A549 (cell line): ENCODE measurements at regions of chr15 and their contacts with region 1.

Region 1: GRCh38 chr15:89177633-89178306 is 43.6 kb downstream of the RLBP1 start:
- DNase-seq: peak; percentile 70 to 82
- ATAC-seq: peak; percentile 83 to 89
- H3K4me3 ChIP-seq: no peak overlapping the region
- H3K27ac ChIP-seq: peak overlapping the region; percentile 10 to 14; a peak in 1 of 6 replicates
- H3K4me1 ChIP-seq: no peaks in the 10 kb centered on the region
- CTCF ChIP-seq: peak; percentile 98
- EP300 ChIP-seq: no peak
- POLR2A ChIP-seq: no peak
- RAD21 ChIP-seq: peak; percentile 94 to 96

Region 2: DNA sequence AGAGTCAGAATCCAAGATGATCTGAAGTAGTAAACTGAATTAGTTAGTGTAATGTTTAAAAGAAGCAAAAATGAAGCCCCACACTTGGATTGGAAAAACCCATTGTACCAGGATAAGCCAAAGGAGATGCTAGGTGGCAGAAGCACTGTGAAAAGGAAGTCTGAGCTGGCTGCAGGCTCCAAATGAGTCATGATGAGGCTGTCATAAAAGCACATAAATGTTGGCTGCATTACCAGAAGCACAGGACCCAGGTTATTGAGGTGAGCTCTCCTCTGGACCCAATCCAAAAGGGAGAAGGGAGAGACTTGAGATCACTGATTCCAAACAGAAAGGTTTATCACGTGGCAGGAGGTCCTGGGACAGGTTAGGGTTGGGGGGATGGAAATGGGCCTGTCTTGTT is 377.7 kb before region 1 on chr15:
- CTCF ChIA-PET with region 1: no interaction called
- POLR2A ChIA-PET with region 1: no interaction called
- DNase-seq: peak in 1 of 2 experiments; percentile 36
- ATAC-seq: peak; percentile 34 to 45; a peak in 2 of 6 replicates
- H3K4me3 ChIP-seq: no peak overlapping the region
- H3K27ac ChIP-seq: no peak overlapping the region
- H3K4me1 ChIP-seq: peaks cover 7% of the 10 kb centered on the region; the same call in 1 of the 3 replicates
- CTCF ChIP-seq: no peak
- EP300 ChIP-seq: no peak
- POLR2A ChIP-seq: no peak
- RAD21 ChIP-seq: no peak

Region 3: GRCh38 chr15:88878720-88879184 is 299.0 kb before region 1 on chr15:
- CTCF ChIA-PET with region 1: interaction called, 16 read pairs
- POLR2A ChIA-PET with region 1: no interaction called
- DNase-seq: peak; percentile 68 to 87
- ATAC-seq: peak; percentile 91 to 95
- H3K4me3 ChIP-seq: no peak overlapping the region
- H3K27ac ChIP-seq: no peak overlapping the region
- H3K4me1 ChIP-seq: no peaks in the 10 kb centered on the region
- CTCF ChIP-seq: peak; percentile 78
- EP300 ChIP-seq: no peak
- POLR2A ChIP-seq: no peak
- RAD21 ChIP-seq: peak; percentile 70 to 82

Region 4: GRCh38 chr15:88918738-88919137 is 259.0 kb before region 1 on chr15:
- CTCF ChIA-PET with region 1: no interaction called
- POLR2A ChIA-PET with region 1: no interaction called
- DNase-seq: peak in 1 of 2 experiments; percentile 77
- ATAC-seq: peak; percentile 78 to 87
- H3K4me3 ChIP-seq: no peak overlapping the region
- H3K27ac ChIP-seq: peak overlapping the region; percentile 49 to 78; a peak in 5 of 6 replicates
- H3K4me1 ChIP-seq: peaks cover 37% of the 10 kb centered on the region
- CTCF ChIP-seq: no peak
- EP300 ChIP-seq: no peak
- POLR2A ChIP-seq: no peak
- RAD21 ChIP-seq: no peak

Region 5: GRCh38 chr15:89017370-89018066 is 160.3 kb before region 1 on chr15:
- CTCF ChIA-PET with region 1: interaction called, 224 read pairs
- POLR2A ChIA-PET with region 1: no interaction called
- DNase-seq: peak; percentile 82 to 84
- ATAC-seq: peak; percentile 90 to 95
- H3K4me3 ChIP-seq: peak overlapping the region; percentile 37
- H3K27ac ChIP-seq: peak overlapping the region; percentile 68 to 79
- H3K4me1 ChIP-seq: peaks cover 17% of the 10 kb centered on the region
- CTCF ChIP-seq: peak; percentile 97
- EP300 ChIP-seq: no peak
- POLR2A ChIP-seq: no peak
- RAD21 ChIP-seq: peak; percentile 93 to 95

Region 6: DNA sequence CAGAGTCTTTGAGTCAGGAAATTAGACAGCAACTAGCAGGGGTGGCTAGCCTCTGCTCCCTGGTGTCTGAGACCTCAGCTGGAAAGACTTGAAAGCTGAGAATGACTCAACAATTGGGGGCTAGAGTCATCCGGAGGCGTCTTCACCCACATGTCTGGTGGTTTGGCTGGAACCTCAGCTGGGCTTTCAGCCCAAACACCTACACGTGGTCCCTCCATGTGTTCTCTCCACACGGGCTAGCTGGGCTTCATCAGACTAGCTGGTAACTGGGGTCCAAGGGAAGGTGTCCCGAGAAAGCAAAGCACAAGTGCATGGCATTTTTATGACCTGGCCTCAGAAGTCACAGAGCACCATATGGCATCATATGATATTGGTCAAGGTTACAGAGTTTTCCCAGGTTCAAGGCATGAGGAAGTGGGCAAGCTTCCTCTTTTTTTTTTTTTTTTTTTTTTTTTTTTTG is 109.4 kb before region 1 on chr15:
- CTCF ChIA-PET with region 1: interaction called, 735 read pairs
- POLR2A ChIA-PET with region 1: no interaction called
- DNase-seq: peak in 1 of 2 experiments; percentile 46
- ATAC-seq: peak; percentile 67; a peak in 4 of 6 replicates
- H3K4me3 ChIP-seq: no peak overlapping the region
- H3K27ac ChIP-seq: peak overlapping the region; percentile 34 to 57; a peak in 4 of 6 replicates
- H3K4me1 ChIP-seq: peaks cover 25% of the 10 kb centered on the region; the same call in 2 of the 3 replicates
- CTCF ChIP-seq: no peak
- EP300 ChIP-seq: no peak
- POLR2A ChIP-seq: no peak
- RAD21 ChIP-seq: no peak

Region 7: GRCh38 chr15:89112341-89112971 is 65.3 kb before region 1 on chr15:
- CTCF ChIA-PET with region 1: interaction called, 25 read pairs
- POLR2A ChIA-PET with region 1: no interaction called
- DNase-seq: peak in 1 of 2 experiments; percentile 71
- ATAC-seq: peak; percentile 55 to 65; a peak in 4 of 6 replicates
- H3K4me3 ChIP-seq: no peak overlapping the region
- H3K27ac ChIP-seq: peak overlapping the region; percentile 87 to 95
- H3K4me1 ChIP-seq: peaks cover 85% of the 10 kb centered on the region
- CTCF ChIP-seq: no peak
- EP300 ChIP-seq: 0 out of 5 replicates have a peak, but pooled peaks of 1 of the 2 experiments have one; percentile 16
- POLR2A ChIP-seq: no peak
- RAD21 ChIP-seq: no peak

Region 8: DNA sequence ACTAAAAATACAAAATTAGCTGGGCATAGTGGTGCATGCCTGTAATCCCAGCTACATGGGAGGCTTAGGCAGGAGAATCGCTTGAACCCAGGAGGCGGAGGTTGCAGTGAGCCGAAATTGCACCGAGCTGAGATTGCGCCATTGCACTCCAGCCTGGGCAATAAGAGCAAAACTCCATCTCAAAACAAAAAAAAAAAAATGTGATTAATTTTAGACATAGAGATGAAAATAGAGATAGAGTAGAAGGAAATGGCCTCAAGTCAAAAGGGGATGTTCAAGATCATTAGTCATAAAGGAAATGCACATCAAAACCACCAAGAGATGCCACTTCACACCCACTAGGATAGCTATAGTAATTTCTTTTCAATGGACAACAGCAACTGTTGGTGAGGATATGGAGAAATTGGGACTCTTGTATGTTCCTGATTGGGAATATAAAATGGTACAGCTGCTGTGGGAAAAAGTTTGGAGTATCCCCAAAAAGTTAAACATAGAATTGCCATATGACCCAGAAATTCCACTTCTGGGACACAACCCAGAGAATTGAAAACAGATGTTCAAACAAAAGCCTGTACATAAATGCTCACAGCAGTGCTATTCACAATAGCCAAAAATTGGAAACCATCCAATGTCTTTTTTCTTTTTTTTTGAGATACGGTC is 34.1 kb before region 1 on chr15:
- CTCF ChIA-PET with region 1: interaction called, 126 read pairs
- POLR2A ChIA-PET with region 1: no interaction called
- DNase-seq: no peak
- ATAC-seq: no peak
- H3K4me3 ChIP-seq: no peak overlapping the region
- H3K27ac ChIP-seq: no peak overlapping the region
- H3K4me1 ChIP-seq: peaks cover 36% of the 10 kb centered on the region
- CTCF ChIP-seq: no peak
- EP300 ChIP-seq: no peak
- POLR2A ChIP-seq: no peak
- RAD21 ChIP-seq: no peak

Region 9: DNA sequence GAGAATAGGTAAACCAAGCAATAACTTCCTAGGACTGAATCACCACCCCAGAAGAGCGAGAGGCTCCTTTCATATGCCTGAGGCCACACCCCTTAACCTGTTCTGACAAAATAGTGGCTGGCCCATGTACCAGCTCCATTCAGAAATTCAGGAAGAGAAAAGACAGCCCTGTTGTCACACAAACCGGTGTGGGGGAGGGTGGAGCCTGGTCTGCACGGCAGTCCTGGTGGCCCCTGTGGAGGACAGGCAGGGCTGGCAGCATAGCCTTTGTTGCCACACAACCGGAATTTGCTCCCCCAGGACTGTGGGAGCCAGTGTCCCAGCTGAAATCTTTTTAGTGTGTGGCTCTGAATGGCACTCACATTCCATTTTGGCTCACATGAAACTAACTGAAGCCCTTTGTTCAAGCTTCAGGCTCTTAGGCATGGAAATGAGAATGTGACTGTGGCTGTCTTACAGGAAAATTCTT is 19.8 kb after region 1 on chr15:
- CTCF ChIA-PET with region 1: interaction called, 15 read pairs
- POLR2A ChIA-PET with region 1: no interaction called
- DNase-seq: no peak
- ATAC-seq: no peak
- H3K4me3 ChIP-seq: no peak overlapping the region
- H3K27ac ChIP-seq: no peak overlapping the region
- H3K4me1 ChIP-seq: no peaks in the 10 kb centered on the region
- CTCF ChIP-seq: no peak
- EP300 ChIP-seq: no peak
- POLR2A ChIP-seq: no peak
- RAD21 ChIP-seq: no peak

Region 10: GRCh38 chr15:89613031-89613430 is 435.3 kb after region 1 on chr15:
- CTCF ChIA-PET with region 1: no interaction called
- POLR2A ChIA-PET with region 1: no interaction called
- DNase-seq: no peak
- ATAC-seq: no peak
- H3K4me3 ChIP-seq: no peak overlapping the region
- H3K27ac ChIP-seq: no peak overlapping the region
- H3K4me1 ChIP-seq: no peaks in the 10 kb centered on the region
- CTCF ChIP-seq: no peak
- EP300 ChIP-seq: no peak
- POLR2A ChIP-seq: no peak
- RAD21 ChIP-seq: no peak